Activated B cell treated with CpG ODN at 0.5 μM for 24 hours (primary cell): ENCODE measurements at regions of chr2 and their contacts with region 1.

Region 1: DNA sequence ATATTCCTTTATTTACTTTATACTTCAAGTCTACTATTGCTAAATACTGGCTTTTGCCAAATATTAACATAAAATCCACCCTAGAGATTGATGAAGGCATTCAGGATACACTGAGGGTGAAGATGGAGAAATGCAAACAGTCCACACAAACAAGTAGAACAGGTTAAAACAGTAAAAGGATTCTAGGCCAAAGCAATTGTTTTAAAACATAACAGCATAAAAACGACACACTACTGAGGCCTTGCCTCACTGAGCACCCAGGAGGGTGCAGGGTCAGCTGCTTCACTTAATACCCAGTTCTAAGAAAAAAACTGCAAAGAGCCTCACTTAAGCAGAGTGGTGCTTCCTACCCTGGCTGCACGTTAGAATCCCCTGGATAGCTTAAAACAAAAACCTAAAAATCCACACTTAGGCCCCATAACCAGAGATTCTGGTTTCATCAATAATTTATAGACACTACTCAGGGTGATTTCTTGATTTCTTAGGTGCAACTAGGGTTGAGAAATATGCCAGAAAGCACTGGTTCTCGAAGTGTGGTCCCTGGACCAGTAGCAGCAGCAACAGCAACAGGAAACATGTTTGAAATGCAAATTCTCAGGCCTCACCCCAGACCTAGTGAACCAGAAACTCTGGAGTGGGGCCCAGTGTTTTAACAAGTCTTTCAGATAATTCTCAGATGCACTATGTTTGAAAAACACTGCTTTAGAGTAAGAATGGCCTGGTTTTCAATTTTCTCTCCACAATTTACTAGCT is 279.2 kb downstream of the ZEB2 start:
- DNase-seq: no peak
- ATAC-seq: peak; percentile 84
- H3K4me3 Mint-ChIP-seq: peak overlapping the region; percentile 60
- H3K27ac Mint-ChIP-seq: peak overlapping the region; percentile 93
- H3K4me1 Mint-ChIP-seq: peaks cover 79% of the 10 kb centered on the region
- H3K27me3 Mint-ChIP-seq: no peaks in the 10 kb centered on the region
- CTCF ChIP-seq: no peak

Region 2: GRCh38 chr2:143668234-143668633 is 572.5 kb before region 1 on chr2:
- CTCF ChIA-PET with region 1: no interaction called
- POLR2A ChIA-PET with region 1: no interaction called
- intact Hi-C with region 1: no loop called
- DNase-seq: no peak
- ATAC-seq: no peak
- H3K4me3 Mint-ChIP-seq: no peak overlapping the region
- H3K27ac Mint-ChIP-seq: no peak overlapping the region
- H3K4me1 Mint-ChIP-seq: no peaks in the 10 kb centered on the region
- H3K27me3 Mint-ChIP-seq: no peaks in the 10 kb centered on the region
- CTCF ChIP-seq: no peak

Region 3: GRCh38 chr2:143936848-143937722 is 303.7 kb before region 1 on chr2:
- CTCF ChIA-PET with region 1: no interaction called
- POLR2A ChIA-PET with region 1: interaction called, 11 read pairs
- intact Hi-C with region 1: no loop called
- DNase-seq: peak; percentile 24
- ATAC-seq: peak; percentile 67
- H3K4me3 Mint-ChIP-seq: peak overlapping the region; percentile 70
- H3K27ac Mint-ChIP-seq: no peak overlapping the region
- H3K4me1 Mint-ChIP-seq: peaks cover 20% of the 10 kb centered on the region
- H3K27me3 Mint-ChIP-seq: peaks cover 19% of the 10 kb centered on the region
- CTCF ChIP-seq: no peak

Region 4: GRCh38 chr2:144183727-144184126 is 57.0 kb before region 1 on chr2:
- CTCF ChIA-PET with region 1: no interaction called
- POLR2A ChIA-PET with region 1: interaction called, 9 read pairs
- intact Hi-C with region 1: loop called (anchors 2 kb)
- DNase-seq: peak; percentile 35
- ATAC-seq: peak; percentile 96
- H3K4me3 Mint-ChIP-seq: peak overlapping the region; percentile 82
- H3K27ac Mint-ChIP-seq: peak overlapping the region; percentile 85
- H3K4me1 Mint-ChIP-seq: peaks cover 28% of the 10 kb centered on the region
- H3K27me3 Mint-ChIP-seq: no peaks in the 10 kb centered on the region
- CTCF ChIP-seq: no peak

Region 5: GRCh38 chr2:144198117-144198516 is 42.6 kb before region 1 on chr2:
- CTCF ChIA-PET with region 1: no interaction called
- POLR2A ChIA-PET with region 1: no interaction called
- intact Hi-C with region 1: loop called (anchors 5 kb)
- DNase-seq: no peak
- ATAC-seq: no peak
- H3K4me3 Mint-ChIP-seq: no peak overlapping the region
- H3K27ac Mint-ChIP-seq: no peak overlapping the region
- H3K4me1 Mint-ChIP-seq: peaks cover 20% of the 10 kb centered on the region
- H3K27me3 Mint-ChIP-seq: no peaks in the 10 kb centered on the region
- CTCF ChIP-seq: no peak

Region 6: DNA sequence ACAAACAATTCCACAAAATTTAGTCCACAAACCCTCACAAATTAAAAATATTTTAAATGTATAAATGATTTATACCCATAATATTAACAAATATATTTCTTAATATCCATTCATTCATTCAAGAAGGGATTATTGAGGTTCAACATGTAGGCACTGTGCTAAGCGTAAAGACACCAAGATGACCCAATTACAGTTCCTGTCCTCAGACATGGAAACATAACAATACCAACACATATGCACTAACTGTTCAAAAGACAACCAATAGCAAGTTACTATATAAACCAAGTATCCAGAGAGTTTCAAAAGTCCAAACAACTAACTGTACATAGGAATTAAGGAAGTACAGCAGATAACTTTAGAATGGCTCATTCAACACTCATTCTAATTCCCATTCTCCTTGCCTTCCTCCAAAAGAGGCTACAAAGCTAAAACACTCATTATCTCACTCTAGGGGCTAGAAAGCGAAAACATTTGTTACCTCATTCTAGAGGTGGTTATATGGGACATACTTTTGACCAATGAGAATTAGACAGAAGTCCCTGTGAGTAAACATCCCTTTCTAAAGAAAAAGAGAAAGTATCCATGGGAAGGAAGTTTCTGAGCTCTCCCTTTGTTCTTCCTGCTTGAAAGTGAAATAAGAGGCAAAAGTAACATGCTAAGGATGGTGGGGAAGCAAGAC is 13.2 kb before region 1 on chr2:
- CTCF ChIA-PET with region 1: no interaction called
- POLR2A ChIA-PET with region 1: interaction called, 3 read pairs
- intact Hi-C with region 1: loop called (anchors 2 kb)
- DNase-seq: no peak
- ATAC-seq: no peak
- H3K4me3 Mint-ChIP-seq: no peak overlapping the region
- H3K27ac Mint-ChIP-seq: no peak overlapping the region
- H3K4me1 Mint-ChIP-seq: peaks cover 16% of the 10 kb centered on the region
- H3K27me3 Mint-ChIP-seq: no peaks in the 10 kb centered on the region
- CTCF ChIP-seq: no peak

Region 7: GRCh38 chr2:144320491-144320890 is 79.7 kb after region 1 on chr2:
- CTCF ChIA-PET with region 1: no interaction called
- POLR2A ChIA-PET with region 1: interaction called, 5 read pairs
- intact Hi-C with region 1: loop called (anchors 5 kb)
- DNase-seq: no peak
- ATAC-seq: peak; percentile 56
- H3K4me3 Mint-ChIP-seq: no peak overlapping the region
- H3K27ac Mint-ChIP-seq: no peak overlapping the region
- H3K4me1 Mint-ChIP-seq: peaks cover 44% of the 10 kb centered on the region
- H3K27me3 Mint-ChIP-seq: no peaks in the 10 kb centered on the region
- CTCF ChIP-seq: no peak

Region 8: DNA sequence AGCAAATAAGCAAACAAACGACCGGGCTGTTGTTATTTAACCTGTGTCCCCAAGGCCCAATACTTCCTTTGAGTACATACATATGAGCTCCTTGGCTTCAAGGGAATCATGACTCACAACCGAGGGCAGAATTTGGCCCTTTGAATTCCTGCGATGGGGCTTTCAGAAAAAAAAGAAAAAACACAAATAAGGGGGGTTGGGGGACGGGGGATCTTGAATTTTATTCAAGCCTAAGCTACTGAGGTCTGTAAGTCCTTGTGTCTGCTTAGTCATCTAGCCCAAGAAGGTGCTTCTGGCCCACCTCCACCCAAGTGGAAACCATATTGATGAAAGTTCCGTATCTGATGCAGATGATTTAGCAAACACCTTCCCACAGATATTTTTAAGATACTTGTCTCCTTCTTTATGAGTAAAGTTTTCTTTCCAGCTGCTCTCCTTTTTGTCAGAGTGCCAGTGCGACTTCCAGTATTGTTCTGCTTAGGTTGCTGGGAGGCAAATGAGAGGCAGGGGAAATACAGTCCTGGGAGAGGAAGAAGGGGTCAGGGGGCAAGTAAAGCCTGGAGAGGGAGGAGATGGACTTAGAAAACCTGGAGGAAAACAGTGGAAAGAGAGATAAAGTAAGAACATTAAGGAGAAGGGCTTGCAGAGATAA is 109.5 kb after region 1 on chr2:
- CTCF ChIA-PET with region 1: no interaction called
- POLR2A ChIA-PET with region 1: no interaction called
- intact Hi-C with region 1: no loop called
- DNase-seq: no peak
- ATAC-seq: no peak
- H3K4me3 Mint-ChIP-seq: no peak overlapping the region
- H3K27ac Mint-ChIP-seq: no peak overlapping the region
- H3K4me1 Mint-ChIP-seq: no peaks in the 10 kb centered on the region
- H3K27me3 Mint-ChIP-seq: no peaks in the 10 kb centered on the region
- CTCF ChIP-seq: no peak

Region 9: GRCh38 chr2:144382849-144383248 is 142.1 kb after region 1 on chr2:
- CTCF ChIA-PET with region 1: no interaction called
- POLR2A ChIA-PET with region 1: interaction called, 4 read pairs
- intact Hi-C with region 1: loop called (anchors 5 kb)
- DNase-seq: no peak
- ATAC-seq: peak; percentile 97
- H3K4me3 Mint-ChIP-seq: peak overlapping the region; percentile 50
- H3K27ac Mint-ChIP-seq: peak overlapping the region; percentile 72
- H3K4me1 Mint-ChIP-seq: peaks cover 44% of the 10 kb centered on the region
- H3K27me3 Mint-ChIP-seq: no peaks in the 10 kb centered on the region
- CTCF ChIP-seq: no peak